ENCODE measurements at regions of chr12 and their contacts with region 1.

Region 1: GRCh38 chr12:5796171-5796958 is 148.7 kb downstream of the ANO2 start:
- DNase-seq: peak; percentile 69 to 83
- H3K4me3 ChIP-seq: no peak overlapping the region
- H3K4me3 Mint-ChIP-seq: no peak overlapping the region
- H3K27ac Mint-ChIP-seq: no peak overlapping the region
- H3K4me1 ChIP-seq: no peaks in the 10 kb centered on the region
- H3K4me1 Mint-ChIP-seq: no peaks in the 10 kb centered on the region
- H3K27me3 ChIP-seq: no peaks in the 10 kb centered on the region
- H3K27me3 Mint-ChIP-seq: peaks cover 11% of the 10 kb centered on the region
- CTCF ChIP-seq: peak; percentile 93 to 96

Region 2: DNA sequence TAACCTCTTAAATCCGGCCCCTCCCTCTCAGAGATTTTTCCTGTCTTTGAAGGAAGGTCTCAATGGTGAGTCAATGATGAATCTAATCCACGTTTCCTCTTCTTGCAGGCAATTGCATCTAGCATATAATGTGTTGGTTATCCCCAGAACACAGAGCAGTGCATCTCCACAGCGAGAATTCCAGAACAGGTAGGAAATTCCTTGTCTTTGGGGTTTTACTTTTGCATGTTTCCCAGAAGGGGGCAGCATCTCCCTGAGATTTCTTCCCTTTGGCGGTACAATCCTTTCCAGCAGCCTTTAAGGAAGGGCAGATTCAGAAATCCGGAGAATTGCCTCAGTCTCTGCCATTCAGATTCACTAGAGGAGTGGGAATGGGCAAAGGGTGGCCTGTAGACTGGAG is 624.7 kb before region 1 on chr12:
- CTCF ChIA-PET with region 1: no interaction called
- POLR2A ChIA-PET with region 1: no interaction called
- intact Hi-C with region 1: loop called (anchors 1 kb)
- DNase-seq: peak; percentile 62 to 81
- H3K4me3 ChIP-seq: no peak overlapping the region
- H3K4me3 Mint-ChIP-seq: no peak overlapping the region
- H3K27ac Mint-ChIP-seq: no peak overlapping the region
- H3K4me1 ChIP-seq: no peaks in the 10 kb centered on the region
- H3K4me1 Mint-ChIP-seq: no peaks in the 10 kb centered on the region
- H3K27me3 ChIP-seq: no peaks in the 10 kb centered on the region; the same call in 1 of the 2 replicates
- H3K27me3 Mint-ChIP-seq: peaks cover 8% of the 10 kb centered on the region
- CTCF ChIP-seq: peak; percentile 81 to 87

Region 3: DNA sequence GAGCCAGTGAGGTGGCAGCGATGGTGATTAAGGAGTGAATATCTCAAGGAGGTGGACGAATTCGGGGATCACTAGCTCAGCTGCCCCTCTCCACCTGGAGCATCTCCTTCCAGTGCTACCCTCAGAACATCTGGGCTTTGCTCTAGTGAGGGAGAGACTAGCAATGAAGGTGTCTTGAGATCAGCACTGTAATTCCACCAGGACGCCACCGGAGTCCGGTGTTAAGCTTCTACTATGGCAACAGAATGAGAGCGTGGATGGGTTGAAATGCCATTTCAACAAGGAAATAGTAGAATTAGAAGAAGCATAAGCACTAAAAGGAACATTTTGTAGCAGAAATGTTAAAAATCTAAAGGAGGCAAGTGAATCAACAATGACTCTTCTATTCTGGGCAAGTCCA is 303.3 kb before region 1 on chr12:
- CTCF ChIA-PET with region 1: no interaction called
- POLR2A ChIA-PET with region 1: no interaction called
- intact Hi-C with region 1: loop called (anchors 1 kb)
- DNase-seq: peak; percentile 68 to 70
- H3K4me3 ChIP-seq: no peak overlapping the region
- H3K4me3 Mint-ChIP-seq: no peak overlapping the region
- H3K27ac Mint-ChIP-seq: peak overlapping the region; percentile 18
- H3K4me1 ChIP-seq: peaks cover 25% of the 10 kb centered on the region
- H3K4me1 Mint-ChIP-seq: peaks cover 24% of the 10 kb centered on the region
- H3K27me3 ChIP-seq: no peaks in the 10 kb centered on the region
- H3K27me3 Mint-ChIP-seq: no peaks in the 10 kb centered on the region
- CTCF ChIP-seq: peak; percentile 60 to 66

Measured in Caco-2 (cell line).